ENCODE measurements at regions of chr1 and their contacts with region 1.

Region 1: DNA sequence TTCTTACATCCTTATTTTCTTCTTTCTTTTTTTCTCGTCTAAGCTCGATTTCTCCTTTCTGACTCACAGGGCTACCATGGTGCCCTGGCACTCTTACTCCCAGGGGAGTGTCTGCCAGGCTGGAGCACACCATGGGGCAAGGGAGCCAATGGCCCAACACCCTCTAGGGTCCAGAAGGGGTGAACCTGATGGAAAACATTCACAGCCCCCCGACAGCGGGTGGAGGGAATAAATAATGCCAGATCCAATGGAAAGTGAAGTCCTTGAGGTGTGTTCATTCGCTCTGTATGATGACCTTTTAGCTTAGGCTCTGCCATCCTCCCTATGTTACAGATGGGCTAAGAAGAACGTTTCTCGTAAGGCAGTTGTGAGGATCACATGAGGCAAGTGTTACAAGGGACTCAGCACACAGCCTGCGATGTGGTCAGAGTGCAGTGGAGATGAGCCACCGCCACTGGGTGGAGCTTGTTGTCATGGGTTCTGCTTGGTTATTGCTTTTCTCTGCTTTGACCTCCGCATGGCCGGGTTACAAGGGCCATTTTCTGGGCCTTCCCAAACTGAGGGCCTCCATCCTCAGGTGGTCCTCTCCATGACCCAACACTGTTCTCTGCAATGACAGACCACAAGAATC is 3.5 kb upstream of the FCMR start:
- DNase-seq: peak in 1 of 2 donors; percentile 18
- ATAC-seq: peak in 4 of 8 donors; percentile 17 to 47 (median 33)
- H3K4me3 ChIP-seq: no peak overlapping the region
- H3K27ac ChIP-seq: peak overlapping the region in 1 of 10 donors; percentile 82
- H3K4me1 ChIP-seq: peaks cover 0 to 49% (median 0%) of the 10 kb centered on the region in 9 donors
- H3K27me3 ChIP-seq: no peaks in the 10 kb centered on the region
- CTCF ChIP-seq: peak in 2 of 9 donors; percentile 7 to 31

Region 2: GRCh38 chr1:206469933-206470691 is 455.1 kb before region 1 on chr1 and contains the start of gene IKBKE:
- intact Hi-C with region 1: loop called in 1 of 10 experiments (anchors 10 kb)
- DNase-seq: peak in 1 of 2 donors; percentile 36
- ATAC-seq: peak; percentile 63 to 84 (median 76)
- H3K4me3 ChIP-seq: peak within 1 kb of the TSS; percentile 21 to 70 (median 54)
- H3K27ac ChIP-seq: peak within 1 kb of the TSS in 2 of 10 donors; percentile 27 to 87
- H3K4me1 ChIP-seq: peaks cover 4 to 76% (median 26%) of the 10 kb centered on the region in 9 donors
- H3K27me3 ChIP-seq: peaks cover 0 to 27% (median 0%) of the 10 kb centered on the region in 7 donors
- CTCF ChIP-seq: peak in 3 of 9 donors; percentile 13 to 32 (median 23)
- total RNA-seq, gene IKBKE: 0.49 to 5.4 (median 0.79) TPM

Region 3: GRCh38 chr1:206628916-206629315 is 296.3 kb before region 1 on chr1:
- intact Hi-C with region 1: loop called in 1 of 10 experiments (anchors 5 kb)
- DNase-seq: no peak
- ATAC-seq: no peak
- H3K4me3 ChIP-seq: no peak overlapping the region
- H3K27ac ChIP-seq: no peak overlapping the region
- H3K4me1 ChIP-seq: peaks cover 0 to 15% (median 8%) of the 10 kb centered on the region in 9 donors
- H3K27me3 ChIP-seq: no peaks in the 10 kb centered on the region
- CTCF ChIP-seq: no peak

Region 4: DNA sequence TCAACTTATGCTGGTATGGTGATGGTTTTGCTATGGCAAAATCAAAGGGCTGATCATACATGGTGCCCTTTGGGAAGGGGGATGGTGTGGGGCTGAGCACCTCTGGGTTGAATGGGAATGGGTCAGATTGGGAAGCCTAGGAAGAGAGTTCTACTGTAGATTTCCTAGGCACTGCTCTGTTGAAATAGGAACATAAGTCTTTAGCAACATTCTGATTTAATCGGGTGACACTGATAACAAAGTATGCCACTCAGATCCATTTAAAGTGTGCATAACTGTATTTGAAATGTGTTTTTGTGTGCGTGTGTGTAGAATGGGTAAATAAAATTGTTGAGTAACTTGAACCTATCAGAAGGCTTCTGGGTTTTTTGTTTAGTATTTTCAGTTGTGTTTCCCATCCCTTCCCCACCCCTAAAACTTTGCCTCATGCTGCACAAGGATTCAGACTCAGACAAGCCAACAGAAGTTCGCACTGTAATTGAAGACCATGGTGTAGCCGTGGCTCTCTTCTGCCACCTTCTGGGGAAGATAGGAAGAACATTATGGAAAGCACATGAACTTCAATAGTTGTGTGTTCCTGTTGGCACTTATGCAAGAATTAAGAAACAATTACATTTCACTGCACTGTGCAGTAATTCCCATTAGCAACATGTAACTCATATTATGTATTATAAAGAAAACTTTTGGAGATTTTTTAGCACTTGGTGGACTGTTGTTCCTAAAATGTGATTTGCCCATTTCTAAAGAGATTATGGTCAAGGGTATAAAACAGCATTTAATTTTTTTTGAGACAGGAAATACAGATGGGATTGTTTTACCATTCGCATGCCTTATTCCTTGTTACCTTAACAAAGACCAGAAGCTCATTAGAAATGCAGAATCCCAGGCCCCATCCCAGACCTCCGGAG is 152.5 kb after region 1 on chr1:
- intact Hi-C with region 1: loop called in 1 of 10 experiments (anchors 10 kb)
- DNase-seq: peak in 1 of 2 donors; percentile 74
- ATAC-seq: peak; percentile 62 to 86 (median 80)
- H3K4me3 ChIP-seq: no peak overlapping the region
- H3K27ac ChIP-seq: peak overlapping the region in 5 of 10 donors; percentile 12 to 69 (median 42)
- H3K4me1 ChIP-seq: peaks cover 0 to 58% (median 21%) of the 10 kb centered on the region in 9 donors
- H3K27me3 ChIP-seq: no peaks in the 10 kb centered on the region
- CTCF ChIP-seq: peak; percentile 71 to 94 (median 88)

Region 5: DNA sequence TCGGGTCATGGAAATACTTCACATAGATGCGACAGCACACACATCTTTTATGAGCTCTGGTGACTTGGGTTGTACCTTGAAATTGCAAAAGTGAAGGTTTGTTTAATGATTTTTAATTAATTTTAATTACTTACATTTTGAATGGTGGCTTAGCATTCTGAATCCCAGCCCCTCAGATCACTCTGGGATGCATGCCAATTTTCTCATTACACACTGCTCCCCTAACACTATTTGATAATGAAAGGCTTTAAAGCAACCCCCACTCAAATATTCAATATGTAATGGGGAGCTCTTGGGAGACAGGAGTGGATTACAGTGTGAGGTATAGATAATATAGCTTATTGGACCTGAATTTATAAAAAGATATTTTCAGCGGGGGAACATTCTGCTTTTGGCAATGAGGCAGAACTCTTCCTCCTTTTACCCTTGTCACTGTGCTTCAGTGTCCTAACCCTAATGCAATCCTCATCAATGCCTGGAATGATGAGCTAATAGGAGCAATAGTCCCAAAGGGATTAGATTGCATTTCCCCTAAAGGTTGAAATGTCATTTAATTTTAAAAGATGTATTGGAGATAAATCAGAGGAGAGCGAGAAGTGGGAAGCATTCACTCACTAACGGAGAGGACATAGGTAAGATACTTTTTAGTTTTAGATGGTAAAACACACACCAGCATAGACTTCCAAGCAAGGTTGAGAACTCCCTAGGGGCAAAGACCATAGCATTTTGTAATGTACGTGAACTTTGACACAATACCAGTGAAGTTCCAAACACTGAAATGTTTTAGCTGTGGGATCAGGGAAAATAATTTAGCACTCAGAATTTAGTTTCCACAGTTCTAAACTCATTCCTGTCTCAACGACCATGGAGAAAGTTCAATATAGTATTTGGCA is 1703.0 kb after region 1 on chr1:
- intact Hi-C with region 1: loop called in 1 of 10 experiments (anchors 5 kb)
- DNase-seq: no peak
- ATAC-seq: no peak
- H3K4me3 ChIP-seq: no peak overlapping the region
- H3K27ac ChIP-seq: no peak overlapping the region
- H3K4me1 ChIP-seq: no peaks in the 10 kb centered on the region
- H3K27me3 ChIP-seq: no peaks in the 10 kb centered on the region
- CTCF ChIP-seq: no peak

Measured in heart right ventricle (tissue), 16 donors.